ENCODE measurements at regions of chr15 and their contacts with region 1.

Region 1: DNA sequence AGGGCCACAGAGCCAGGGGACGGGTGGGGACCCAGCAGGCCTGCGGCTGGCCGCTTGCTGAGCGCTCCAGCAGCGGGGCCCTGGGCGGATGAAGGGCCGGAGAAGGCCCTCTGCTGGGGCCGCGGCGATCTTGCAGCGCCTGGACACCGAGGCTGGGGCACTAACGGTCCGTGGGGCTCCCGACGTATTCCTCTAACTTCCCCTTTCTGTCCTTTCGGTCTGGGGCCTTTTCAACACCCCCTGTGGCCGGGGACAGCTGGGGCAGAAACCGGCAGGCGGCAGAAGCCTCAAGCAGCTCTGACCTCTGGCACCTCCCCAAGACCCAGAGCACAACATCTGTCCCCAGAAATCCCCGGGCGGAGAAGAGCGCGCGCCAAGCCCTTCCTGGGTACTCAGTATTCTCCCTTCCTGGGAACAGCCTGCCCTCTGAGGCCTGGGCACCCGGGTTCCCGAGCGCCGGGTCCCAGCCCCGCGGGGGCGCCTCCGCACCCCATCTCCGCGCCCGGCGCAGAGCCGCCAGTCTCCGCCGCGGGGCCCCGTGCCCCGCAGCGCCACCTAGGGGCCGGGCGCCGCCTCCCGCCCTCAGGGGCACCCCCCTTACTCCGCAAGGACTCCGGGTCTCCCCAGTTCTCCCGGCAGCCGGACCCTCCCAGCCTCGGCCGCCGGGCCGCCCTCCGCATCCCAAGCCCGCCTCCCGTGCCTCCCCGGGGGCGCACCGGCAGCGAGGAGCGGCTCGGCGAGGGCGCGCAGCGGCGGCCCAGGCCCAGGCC is 582 bp upstream of the SLCO3A1 start:
- DNase-seq: no peak
- H3K4me3 ChIP-seq: peak overlapping the region; percentile 58
- H3K27me3 ChIP-seq: no peaks in the 10 kb centered on the region
- CTCF ChIP-seq: peak; percentile 78

Region 2: GRCh38 chr15:91782221-91782620 is 70.7 kb before region 1 on chr15:
- CTCF ChIA-PET with region 1: no interaction called
- POLR2A ChIA-PET with region 1: no interaction called
- DNase-seq: no peak
- H3K4me3 ChIP-seq: no peak overlapping the region
- H3K27me3 ChIP-seq: no peaks in the 10 kb centered on the region
- CTCF ChIP-seq: no peak

Region 3: DNA sequence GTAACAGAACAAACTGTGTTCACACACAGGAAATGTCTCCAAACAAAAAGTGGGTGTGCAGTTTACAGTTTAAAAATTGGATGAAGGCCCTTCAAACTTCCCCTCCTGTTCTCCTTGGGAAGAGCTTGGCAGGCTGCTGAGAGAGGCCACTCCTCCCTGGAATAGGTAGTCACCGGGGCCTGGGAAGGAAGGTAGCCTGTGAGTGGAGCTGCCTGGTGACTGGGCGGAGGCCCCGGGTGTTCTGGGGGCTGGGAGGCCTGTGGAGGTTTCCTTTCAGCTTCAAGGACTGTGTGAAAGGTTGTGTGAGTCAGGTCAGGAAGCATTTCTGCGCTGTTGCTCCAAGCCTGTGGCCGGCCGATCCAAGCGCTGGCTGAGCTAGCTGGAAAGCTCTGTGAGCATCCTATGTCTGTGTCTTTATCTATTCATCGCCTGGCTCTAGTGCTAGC is 14.7 kb after region 1 on chr15:
- CTCF ChIA-PET with region 1: interaction called, 13 read pairs
- POLR2A ChIA-PET with region 1: no interaction called
- DNase-seq: peak; percentile 58
- H3K4me3 ChIP-seq: no peak overlapping the region
- H3K27me3 ChIP-seq: no peaks in the 10 kb centered on the region
- CTCF ChIP-seq: no peak

Region 4: GRCh38 chr15:91942676-91943576 is 90.0 kb after region 1 on chr15:
- CTCF ChIA-PET with region 1: interaction called, 29 read pairs
- POLR2A ChIA-PET with region 1: no interaction called
- DNase-seq: peak; percentile 78
- H3K4me3 ChIP-seq: no peak overlapping the region
- H3K27me3 ChIP-seq: no peaks in the 10 kb centered on the region
- CTCF ChIP-seq: no peak

Measured in BJ (cell line).